ENCODE measurements at regions of chr3 and their contacts with region 1.

Region 1: DNA sequence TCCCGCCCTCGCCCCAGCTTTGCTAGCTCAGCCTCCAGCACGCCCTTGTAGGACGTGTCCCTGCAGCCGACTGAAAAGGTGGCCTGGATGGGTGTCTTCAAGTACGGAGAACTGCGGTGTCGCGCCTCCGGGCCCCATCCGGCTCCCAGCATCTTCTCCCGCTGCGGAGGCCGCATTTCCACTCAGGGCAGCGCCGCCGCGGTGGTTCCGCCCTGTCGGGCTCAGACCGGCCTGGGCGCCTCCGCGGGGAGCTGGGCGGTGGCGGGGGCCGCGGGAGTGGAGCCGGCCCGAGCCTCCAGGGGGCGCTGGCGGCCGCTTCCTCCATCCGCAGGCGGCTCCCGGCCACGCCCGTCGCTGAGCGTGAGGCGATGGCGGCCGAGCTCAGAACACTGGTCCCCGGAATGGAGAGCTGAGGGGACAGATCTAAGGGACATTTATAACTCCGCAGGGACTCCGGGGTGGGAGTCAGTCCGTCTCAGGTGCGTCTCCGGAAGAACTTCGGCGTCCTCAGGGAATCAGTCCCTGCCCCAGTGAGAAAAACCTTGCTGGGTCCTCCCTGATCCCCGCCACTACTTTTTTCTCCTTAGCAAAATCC is 13.6 kb upstream of the SMCO1 start:
- DNase-seq: peak; percentile 32 to 83
- ATAC-seq: peak; percentile 87 to 99 (median 96)
- H3K4me3 ChIP-seq: peak overlapping the region; percentile 21 to 60 (median 46)
- H3K27ac ChIP-seq: peak overlapping the region in 3 of 10 donors; percentile 56 to 70 (median 57)
- H3K4me1 ChIP-seq: peaks cover 0 to 10% (median 3%) of the 10 kb centered on the region in 9 donors
- H3K27me3 ChIP-seq: peaks cover 0 to 10% (median 0%) of the 10 kb centered on the region in 7 donors
- CTCF ChIP-seq: peak; percentile 37 to 92 (median 74)

Region 2: GRCh38 chr3:196246612-196247308 is 282.0 kb before region 1 on chr3:
- intact Hi-C with region 1: loop called in 3 of 10 experiments (anchors 5 to 10 kb)
- DNase-seq: no peak
- ATAC-seq: no peak
- H3K4me3 ChIP-seq: no peak overlapping the region
- H3K27ac ChIP-seq: peak overlapping the region in 1 of 10 donors; percentile 10
- H3K4me1 ChIP-seq: peaks cover 0 to 3% (median 0%) of the 10 kb centered on the region in 9 donors
- H3K27me3 ChIP-seq: no peaks in the 10 kb centered on the region
- CTCF ChIP-seq: no peak

Region 3: GRCh38 chr3:196251918-196252317 is 276.8 kb before region 1 on chr3:
- intact Hi-C with region 1: loop called in 3 of 10 experiments (anchors 5 to 10 kb)
- DNase-seq: no peak
- ATAC-seq: peak in 2 of 8 donors; percentile 14 to 66
- H3K4me3 ChIP-seq: no peak overlapping the region
- H3K27ac ChIP-seq: no peak overlapping the region
- H3K4me1 ChIP-seq: peaks cover 0 to 4% (median 0%) of the 10 kb centered on the region in 9 donors
- H3K27me3 ChIP-seq: no peaks in the 10 kb centered on the region
- CTCF ChIP-seq: no peak

Region 4: GRCh38 chr3:196684548-196685407 is 156.0 kb after region 1 on chr3:
- intact Hi-C with region 1: loop called in 7 of 10 experiments (anchors 5 to 10 kb)
- DNase-seq: peak; percentile 19 to 74
- ATAC-seq: peak in 7 of 8 donors; percentile 71 to 90 (median 82)
- H3K4me3 ChIP-seq: peak overlapping the region in 2 of 10 donors; percentile 3 to 17
- H3K27ac ChIP-seq: peak overlapping the region in 4 of 10 donors; percentile 24 to 73 (median 34)
- H3K4me1 ChIP-seq: peaks cover 0 to 48% (median 10%) of the 10 kb centered on the region in 9 donors
- H3K27me3 ChIP-seq: peaks cover 0 to 2% (median 0%) of the 10 kb centered on the region in 7 donors
- CTCF ChIP-seq: peak; percentile 81 to 91 (median 89)

Measured in heart right ventricle (tissue), 16 donors.